ENCODE measurements at regions of chr1 and their contacts with region 1.

Region 1: DNA sequence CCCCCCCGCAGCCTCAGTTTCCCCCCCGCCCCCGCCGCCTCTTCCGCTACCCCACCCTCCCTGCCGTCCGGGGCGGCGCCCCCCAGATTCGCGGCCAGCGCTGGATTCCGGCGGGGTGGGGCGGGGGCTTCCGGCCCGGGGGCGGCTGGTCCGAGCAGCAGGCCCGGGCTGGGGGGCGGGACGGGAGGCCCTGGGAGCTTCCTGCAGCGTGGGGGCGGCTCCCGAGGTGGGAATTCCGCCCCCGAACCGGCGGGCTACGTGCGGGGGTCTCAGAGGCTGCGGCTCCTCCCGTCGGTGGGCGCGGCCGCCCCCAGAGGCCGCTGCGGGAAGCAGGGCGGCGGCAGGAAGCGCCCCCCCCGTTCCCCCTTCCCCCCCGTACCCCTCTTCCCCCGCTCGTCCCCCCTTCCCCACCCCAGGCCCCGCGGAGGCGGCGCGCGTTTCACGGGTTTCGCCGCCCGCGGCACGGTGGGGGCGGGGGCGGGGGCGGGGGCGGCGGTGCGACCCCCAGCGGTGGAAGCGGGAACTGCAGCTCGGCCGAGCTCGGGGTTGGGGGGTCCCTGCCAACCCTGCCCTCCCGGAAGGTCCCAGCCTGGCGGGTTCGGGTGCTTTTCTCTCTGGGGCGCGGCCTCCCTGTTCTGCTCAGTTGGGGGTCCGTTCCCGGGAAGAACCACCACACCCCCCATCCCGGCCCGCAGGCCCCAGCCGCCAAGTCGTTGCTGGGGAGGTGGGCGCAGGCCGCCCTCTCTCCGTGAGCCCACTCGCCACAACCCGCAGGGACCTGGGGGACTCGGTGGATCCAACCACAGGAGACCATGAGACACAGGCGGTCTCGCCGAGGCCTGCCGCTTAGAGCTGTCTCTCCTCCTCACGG is 76.3 kb downstream of the MORN1 start:
- DNase-seq: peak; percentile 65 to 86 (median 76)
- ATAC-seq: peak; percentile 44 to 62
- H3K4me3 Mint-ChIP-seq: peak overlapping the region; percentile 36 to 77 (median 69)
- H3K27ac Mint-ChIP-seq: peak overlapping the region in 9 of 10 donors; percentile 48 to 92 (median 85)
- H3K4me1 Mint-ChIP-seq: peaks cover 4 to 47% (median 30%) of the 10 kb centered on the region in 4 donors
- H3K27me3 Mint-ChIP-seq: no peaks in the 10 kb centered on the region

Region 2: GRCh38 chr1:2227346-2228153 is 87.5 kb before region 1 on chr1:
- POLR2A ChIA-PET with region 1: interaction called, 60 read pairs
- DNase-seq: peak; percentile 90 to 96 (median 94)
- ATAC-seq: peak; percentile 75
- H3K4me3 Mint-ChIP-seq: peak overlapping the region in 9 of 10 donors; percentile 30 to 88 (median 61)
- H3K27ac Mint-ChIP-seq: peak overlapping the region in 5 of 10 donors; percentile 33 to 92 (median 62)
- H3K4me1 Mint-ChIP-seq: peaks cover 22 to 39% (median 25%) of the 10 kb centered on the region in 4 donors
- H3K27me3 Mint-ChIP-seq: no peaks in the 10 kb centered on the region

Region 3: DNA sequence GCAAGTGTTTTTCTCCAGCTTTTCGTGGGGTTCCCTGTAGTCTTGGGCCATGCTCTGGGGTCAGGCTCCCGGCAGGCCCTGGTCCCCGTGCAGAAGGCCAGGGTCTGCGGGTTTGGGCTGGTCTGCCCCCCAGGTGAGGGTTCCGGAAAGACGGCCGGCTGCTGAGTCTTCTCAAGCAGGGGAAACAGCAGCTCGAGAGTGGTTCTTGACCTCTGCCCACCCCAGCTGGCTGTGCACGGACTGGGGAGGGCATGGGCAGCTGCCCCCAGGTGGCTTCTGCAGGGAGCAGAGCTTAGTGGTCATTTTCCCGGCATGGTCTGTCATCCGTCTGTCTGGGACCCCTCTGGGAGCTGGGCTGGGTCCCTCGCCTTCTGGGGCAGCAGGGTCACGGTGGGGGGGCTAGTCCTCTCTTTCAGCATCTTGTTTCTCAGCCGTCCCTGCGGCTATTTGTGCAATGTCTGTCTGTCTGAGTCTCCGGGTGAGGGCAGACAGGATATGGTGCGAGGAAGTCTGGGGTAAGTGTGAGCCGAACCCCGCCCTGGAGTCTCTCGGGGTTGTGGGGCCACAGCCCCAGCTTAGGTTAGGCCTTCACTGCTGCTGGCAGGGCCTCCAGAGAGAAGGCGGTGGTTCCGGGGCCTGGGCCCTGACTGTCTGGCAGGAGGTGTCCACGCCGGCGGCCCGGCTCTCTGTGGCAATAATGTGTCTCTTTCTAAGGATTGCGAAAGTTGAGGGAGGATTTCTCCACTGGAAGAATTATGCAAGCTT is 80.9 kb before region 1 on chr1:
- POLR2A ChIA-PET with region 1: interaction called, 60 read pairs
- DNase-seq: peak; percentile 49 to 89 (median 73)
- ATAC-seq: peak; percentile 60 to 61
- H3K4me3 Mint-ChIP-seq: peak overlapping the region; percentile 87 to 100 (median 93)
- H3K27ac Mint-ChIP-seq: peak overlapping the region; percentile 97 to 99 (median 98)
- H3K4me1 Mint-ChIP-seq: peaks cover 36 to 83% (median 79%) of the 10 kb centered on the region in 4 donors
- H3K27me3 Mint-ChIP-seq: no peaks in the 10 kb centered on the region

Region 4: DNA sequence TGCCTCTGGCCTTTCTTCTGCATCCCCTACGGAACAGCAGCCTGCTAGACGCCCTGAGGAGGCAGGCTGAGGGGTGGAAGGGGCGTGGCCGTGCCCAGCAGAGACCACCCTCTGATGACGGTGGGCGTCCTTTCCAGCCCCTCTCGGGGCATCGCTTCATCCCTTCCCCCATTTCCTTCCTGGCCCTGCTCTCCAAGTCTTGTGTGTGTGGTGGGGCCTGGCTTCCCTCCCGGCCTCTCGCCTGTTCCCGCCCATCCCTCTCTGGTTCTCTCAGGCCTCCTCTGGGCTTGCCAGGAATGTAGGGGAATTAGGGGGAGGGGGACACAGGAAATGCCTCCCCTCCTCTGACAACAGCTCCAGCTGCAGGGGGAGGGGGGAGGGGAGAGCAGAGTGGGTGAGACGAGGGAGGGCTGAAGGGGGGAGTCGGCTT is 35.8 kb before region 1 on chr1:
- POLR2A ChIA-PET with region 1: no interaction called
- DNase-seq: no peak
- ATAC-seq: peak; percentile 10 to 29
- H3K4me3 Mint-ChIP-seq: peak overlapping the region in 6 of 10 donors; percentile 22 to 75 (median 47)
- H3K27ac Mint-ChIP-seq: peak overlapping the region in 9 of 10 donors; percentile 43 to 94 (median 78)
- H3K4me1 Mint-ChIP-seq: peaks cover 25 to 65% (median 55%) of the 10 kb centered on the region in 4 donors
- H3K27me3 Mint-ChIP-seq: no peaks in the 10 kb centered on the region

Region 5: DNA sequence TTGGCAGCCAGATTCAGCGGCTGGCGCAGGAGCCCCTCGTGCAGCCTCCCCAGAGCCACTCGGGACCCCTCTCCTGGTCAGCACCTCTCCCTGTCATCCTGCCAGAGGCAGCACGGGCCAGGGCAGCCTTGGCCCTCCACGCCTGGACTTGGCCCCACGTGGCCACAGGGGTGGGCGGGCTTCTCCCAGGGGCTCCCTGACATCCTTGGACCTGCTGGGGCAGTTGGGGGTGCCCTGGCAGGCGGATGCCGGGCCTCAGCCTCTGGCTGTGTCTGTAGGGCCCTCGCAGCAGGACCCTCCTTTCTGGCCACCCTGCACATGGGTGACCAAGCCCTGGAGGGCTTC is 16.1 kb after region 1 on chr1:
- POLR2A ChIA-PET with region 1: no interaction called
- DNase-seq: no peak
- ATAC-seq: no peak
- H3K4me3 Mint-ChIP-seq: no peak overlapping the region
- H3K27ac Mint-ChIP-seq: no peak overlapping the region
- H3K4me1 Mint-ChIP-seq: peaks cover 0 to 7% (median 5%) of the 10 kb centered on the region in 4 donors
- H3K27me3 Mint-ChIP-seq: peaks cover 4 to 13% (median 9%) of the 10 kb centered on the region in 5 donors

Region 6: DNA sequence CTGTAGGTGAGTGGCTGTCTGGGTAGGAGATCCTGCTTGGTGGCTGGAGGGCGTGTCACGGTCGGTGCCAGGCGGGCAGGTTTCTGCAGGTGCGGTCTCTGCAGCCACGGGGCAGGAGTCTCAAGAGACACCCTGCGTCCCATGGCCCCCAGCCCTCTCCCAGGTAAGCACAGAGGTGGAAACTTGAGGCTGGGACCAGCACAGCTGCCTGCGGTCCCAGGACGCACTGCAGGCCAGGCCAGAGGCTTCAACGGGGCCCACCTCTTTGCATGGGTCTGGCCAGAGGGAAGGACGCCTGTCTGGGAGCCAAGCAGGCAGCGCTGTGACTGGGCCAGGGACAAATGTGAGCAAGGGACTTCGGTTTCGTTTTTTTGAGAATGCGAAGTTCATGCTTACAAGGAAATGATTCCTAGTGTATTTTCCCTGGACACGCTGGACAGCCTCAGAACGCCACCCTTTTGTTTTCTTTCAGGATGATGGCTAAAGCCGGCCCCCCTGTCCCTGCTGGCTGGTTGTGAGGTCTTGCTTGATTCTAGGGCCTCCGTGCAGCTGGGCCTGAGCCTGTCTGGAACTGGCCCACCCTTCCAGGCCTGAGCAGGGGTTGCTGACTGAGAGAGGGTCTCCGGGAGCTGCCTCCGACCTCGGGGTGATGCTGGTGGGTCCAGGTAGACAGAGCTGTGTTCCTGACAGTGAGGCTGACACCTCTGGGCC is 38.0 kb after region 1 on chr1:
- POLR2A ChIA-PET with region 1: no interaction called
- DNase-seq: peak in 2 of 10 donors; percentile 2 to 59
- ATAC-seq: no peak
- H3K4me3 Mint-ChIP-seq: no peak overlapping the region
- H3K27ac Mint-ChIP-seq: no peak overlapping the region
- H3K4me1 Mint-ChIP-seq: peaks cover 0 to 1% (median 0%) of the 10 kb centered on the region in 4 donors
- H3K27me3 Mint-ChIP-seq: no peaks in the 10 kb centered on the region

Measured in naive thymus-derived CD8-positive, alpha-beta T cell (primary cell).